Aorta (tissue), 5 donors: ENCODE measurements at regions of chr15 and their contacts with region 1.

Region 1: DNA sequence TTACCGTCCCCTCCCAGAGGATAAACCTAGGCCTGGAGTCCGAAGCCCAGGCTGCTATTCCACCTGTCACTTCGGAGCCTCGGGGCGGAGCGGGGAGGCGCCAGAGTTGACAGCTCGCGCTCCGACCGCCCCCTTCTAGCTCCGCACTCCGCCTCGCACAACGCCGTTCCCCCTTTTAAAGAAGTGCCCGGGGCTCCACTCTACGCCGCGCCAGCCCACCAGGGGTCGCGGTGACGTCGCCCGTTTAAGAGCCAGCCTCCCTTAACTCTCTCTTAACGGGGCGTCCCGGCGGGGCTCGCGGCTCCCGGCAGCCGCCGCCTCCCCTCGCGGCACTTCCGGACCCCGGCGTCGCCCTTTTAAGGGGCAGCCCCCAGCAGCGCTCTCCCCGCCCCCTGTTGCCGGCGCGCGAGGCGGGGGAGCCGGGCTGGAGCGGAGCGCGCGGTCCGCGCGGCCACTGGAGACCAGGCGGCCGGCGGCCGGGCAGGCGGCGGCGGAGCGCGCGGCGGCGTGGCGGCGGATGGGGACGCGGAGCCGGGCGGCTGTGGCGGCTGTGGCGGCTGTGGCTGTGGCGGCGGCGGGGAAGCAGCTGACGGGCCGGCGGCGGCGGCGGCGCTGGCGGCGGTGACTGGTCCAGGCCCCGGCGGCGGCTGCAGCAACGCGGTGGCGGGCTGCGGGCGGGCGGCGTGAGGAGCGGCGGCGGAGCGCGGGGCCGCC is at the start of gene INAFM2:
- DNase-seq: peak; percentile 96 to 97
- ATAC-seq: peak; percentile 92
- H3K4me3 ChIP-seq: peak within 1 kb of the TSS; percentile 96 to 97
- H3K27ac ChIP-seq: peak within 1 kb of the TSS; percentile 91 to 95
- H3K4me1 ChIP-seq: peaks cover 0 to 5% of the 10 kb centered on the region in 2 donors
- H3K27me3 ChIP-seq: no peaks in the 10 kb centered on the region
- total RNA-seq, gene INAFM2: 59.4 to 70.0 TPM

Region 2: GRCh38 chr15:40338041-40338657 is 14.8 kb after region 1 on chr15:
- intact Hi-C with region 1: loop called (anchors 2 kb)
- DNase-seq: peak; percentile 90 to 91
- ATAC-seq: no peak
- H3K4me3 ChIP-seq: no peak overlapping the region
- H3K27ac ChIP-seq: peak overlapping the region; percentile 96
- H3K4me1 ChIP-seq: no peaks in the 10 kb centered on the region
- H3K27me3 ChIP-seq: no peaks in the 10 kb centered on the region